Activated CD4-positive, alpha-beta T cell treated with anti-CD3 and anti-CD28 coated beads for 36 hours (primary cell): ENCODE measurements at regions of chr15 and their contacts with region 1.

Region 1: DNA sequence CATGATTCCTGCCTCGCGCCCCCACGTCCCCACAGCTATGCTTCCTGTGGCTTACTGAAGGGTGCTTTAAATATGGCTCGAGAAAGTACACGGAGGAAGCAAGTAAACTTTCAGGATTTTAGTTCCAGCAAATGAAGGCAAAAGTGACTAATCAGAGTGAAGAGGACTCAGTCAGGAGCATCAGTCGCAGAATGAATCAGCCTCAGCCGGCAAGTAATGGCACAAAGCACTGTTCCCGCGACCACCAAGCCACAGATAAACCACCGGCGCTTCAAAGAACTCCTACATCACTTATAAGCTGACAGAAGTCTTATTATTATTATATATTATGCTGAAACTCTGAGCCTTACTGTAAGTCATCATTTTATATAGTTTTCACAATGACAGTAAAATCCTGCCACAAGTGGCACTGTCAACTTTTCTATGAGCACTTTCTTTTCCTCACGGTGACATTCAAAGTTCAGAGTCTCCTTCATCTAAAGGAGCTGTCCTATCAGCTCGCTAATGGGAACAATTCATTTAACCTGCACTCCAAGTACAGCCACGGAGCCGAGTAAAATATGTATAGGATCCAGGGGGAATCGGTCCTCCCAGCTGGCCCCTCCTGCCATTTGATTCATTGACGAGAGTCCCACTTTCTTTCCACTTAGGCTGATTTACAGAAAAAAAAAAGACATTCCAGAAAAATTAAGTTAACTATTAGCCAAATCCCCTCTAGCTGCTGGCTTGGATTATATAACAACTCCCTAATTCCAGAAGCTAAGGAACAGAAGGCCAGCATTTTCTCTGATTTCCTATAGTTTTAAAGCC is 217.0 kb upstream of the ICE2 start:
- DNase-seq: peak; percentile 93
- ATAC-seq: peak; percentile 84
- H3K4me3 Mint-ChIP-seq: peak overlapping the region; percentile 58
- H3K27ac Mint-ChIP-seq: peak overlapping the region; percentile 81
- H3K4me1 Mint-ChIP-seq: peaks cover 74% of the 10 kb centered on the region
- H3K27me3 Mint-ChIP-seq: no peaks in the 10 kb centered on the region

Region 2: GRCh38 chr15:60548101-60548500 is 147.8 kb before region 1 on chr15:
- CTCF ChIA-PET with region 1: no interaction called
- POLR2A ChIA-PET with region 1: no interaction called
- intact Hi-C with region 1: loop called in 1 of 2 experiments (anchors 1 kb)
- DNase-seq: peak; percentile 84
- ATAC-seq: peak; percentile 83
- H3K4me3 Mint-ChIP-seq: peak overlapping the region; percentile 61
- H3K27ac Mint-ChIP-seq: peak overlapping the region; percentile 96
- H3K4me1 Mint-ChIP-seq: peaks cover 97% of the 10 kb centered on the region
- H3K27me3 Mint-ChIP-seq: no peaks in the 10 kb centered on the region

Region 3: DNA sequence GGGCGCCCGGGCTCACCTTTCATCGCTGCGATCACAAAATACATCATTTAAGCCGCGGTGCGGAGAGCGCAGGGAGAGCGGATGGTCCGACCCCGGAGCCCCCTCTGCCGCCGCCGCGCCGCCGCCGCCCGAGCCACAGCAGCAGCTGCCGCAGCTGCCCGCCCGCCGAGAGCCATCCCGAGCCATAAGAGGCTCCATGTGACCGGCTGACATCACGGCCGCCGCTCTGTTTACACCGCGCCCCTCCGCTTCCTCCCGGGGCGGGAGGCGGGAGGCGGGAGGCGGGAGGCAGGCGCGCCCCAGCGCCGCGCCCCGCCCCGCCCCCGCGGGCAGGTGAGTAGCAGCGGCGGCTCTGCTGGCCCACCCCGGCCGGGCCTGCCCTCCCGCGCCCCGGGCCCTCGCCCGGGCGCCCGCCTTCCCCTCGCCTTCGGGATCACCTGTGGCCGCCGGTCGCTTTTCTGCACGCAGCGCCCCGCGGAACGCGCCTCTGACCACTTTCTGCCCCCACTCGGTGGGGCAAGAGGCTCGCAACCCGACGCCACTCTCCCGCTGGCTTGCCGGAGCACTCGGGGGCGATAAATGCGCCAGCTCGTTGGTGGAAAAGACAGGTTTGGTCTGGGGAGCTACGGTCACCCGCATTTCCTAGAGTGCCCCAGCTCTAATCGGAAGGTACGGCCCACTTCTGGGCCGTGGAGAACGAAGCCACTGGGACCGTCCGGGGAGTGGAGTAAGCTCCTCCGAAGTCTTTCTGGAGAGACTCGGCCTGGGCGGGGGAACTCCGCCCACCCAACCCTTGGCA is 103.3 kb before region 1 on chr15:
- CTCF ChIA-PET with region 1: interaction called, 3 read pairs
- POLR2A ChIA-PET with region 1: interaction called, 5 read pairs
- intact Hi-C with region 1: loop called in 1 of 2 experiments (anchors 5 kb)
- DNase-seq: peak; percentile 91
- ATAC-seq: peak; percentile 85
- H3K4me3 Mint-ChIP-seq: peak overlapping the region; percentile 76
- H3K27ac Mint-ChIP-seq: peak overlapping the region; percentile 51
- H3K4me1 Mint-ChIP-seq: peaks cover 47% of the 10 kb centered on the region
- H3K27me3 Mint-ChIP-seq: no peaks in the 10 kb centered on the region

Region 4: GRCh38 chr15:60649845-60650548 is 45.9 kb before region 1 on chr15:
- CTCF ChIA-PET with region 1: interaction called, 5 read pairs
- POLR2A ChIA-PET with region 1: interaction called, 3 read pairs
- intact Hi-C with region 1: loop called (anchors 1 kb)
- DNase-seq: peak; percentile 68
- ATAC-seq: peak; percentile 89
- H3K4me3 Mint-ChIP-seq: peak overlapping the region; percentile 27
- H3K27ac Mint-ChIP-seq: peak overlapping the region; percentile 82
- H3K4me1 Mint-ChIP-seq: peaks cover 47% of the 10 kb centered on the region
- H3K27me3 Mint-ChIP-seq: no peaks in the 10 kb centered on the region

Region 5: GRCh38 chr15:60660290-60661051 is 35.4 kb before region 1 on chr15:
- CTCF ChIA-PET with region 1: interaction called, 4 read pairs
- POLR2A ChIA-PET with region 1: no interaction called
- intact Hi-C with region 1: loop called in 1 of 2 experiments (anchors 1 kb)
- DNase-seq: no peak
- ATAC-seq: peak; percentile 99
- H3K4me3 Mint-ChIP-seq: no peak overlapping the region
- H3K27ac Mint-ChIP-seq: no peak overlapping the region
- H3K4me1 Mint-ChIP-seq: peaks cover 22% of the 10 kb centered on the region
- H3K27me3 Mint-ChIP-seq: no peaks in the 10 kb centered on the region

Region 6: DNA sequence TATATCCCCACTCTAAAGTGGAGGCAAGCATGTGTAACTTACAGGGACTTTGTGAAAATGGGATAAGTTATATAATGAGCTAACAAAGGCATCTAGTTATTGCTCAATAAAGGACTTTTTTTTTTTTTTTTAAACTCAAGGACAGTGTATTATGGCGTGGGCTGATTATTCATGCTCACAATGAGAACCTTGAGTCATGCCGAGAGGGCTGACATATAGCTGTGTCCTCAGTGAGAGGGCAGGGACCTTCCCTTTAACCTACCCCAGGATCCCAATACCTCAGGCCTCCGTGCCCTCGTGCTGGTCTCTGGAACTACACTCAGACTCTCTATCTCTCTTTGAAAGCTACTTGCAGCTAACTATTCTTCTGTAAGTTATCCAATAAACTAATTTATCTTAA is 102.9 kb after region 1 on chr15:
- CTCF ChIA-PET with region 1: interaction called, 3 read pairs
- POLR2A ChIA-PET with region 1: interaction called, 5 read pairs
- intact Hi-C with region 1: loop called (anchors 1 to 2 kb)
- DNase-seq: peak; percentile 81
- ATAC-seq: peak; percentile 80
- H3K4me3 Mint-ChIP-seq: no peak overlapping the region
- H3K27ac Mint-ChIP-seq: peak overlapping the region; percentile 95
- H3K4me1 Mint-ChIP-seq: peaks cover 85% of the 10 kb centered on the region
- H3K27me3 Mint-ChIP-seq: no peaks in the 10 kb centered on the region

Region 7: GRCh38 chr15:60840306-60840702 is 144.4 kb after region 1 on chr15:
- CTCF ChIA-PET with region 1: no interaction called
- POLR2A ChIA-PET with region 1: interaction called, 4 read pairs
- intact Hi-C with region 1: loop called (anchors 2 to 5 kb)
- DNase-seq: peak; percentile 34
- ATAC-seq: peak; percentile 5
- H3K4me3 Mint-ChIP-seq: peak overlapping the region; percentile 60
- H3K27ac Mint-ChIP-seq: peak overlapping the region; percentile 62
- H3K4me1 Mint-ChIP-seq: peaks cover 77% of the 10 kb centered on the region
- H3K27me3 Mint-ChIP-seq: peaks cover 2% of the 10 kb centered on the region